Activated T-helper 2 cell treated with anti-CD3 and anti-CD28 coated beads, Interferon-gamma antibody, Interleukin-2, Interleukin-4, amounts not matched to agents 10 μg/mL and 5 μg/mL and 100 μg/mL, durations not matched to agents 14 hours and 24 hours and 36 hours (primary cell): ENCODE measurements at regions of chr10 and their contacts with region 1.

Region 1: GRCh38 chr10:106175760-106176377 is 988.6 kb downstream of the SORCS1 start:
- DNase-seq: no peak
- H3K4me3 Mint-ChIP-seq: no peak overlapping the region
- H3K27ac Mint-ChIP-seq: no peak overlapping the region
- H3K4me1 Mint-ChIP-seq: no peaks in the 10 kb centered on the region
- H3K27me3 Mint-ChIP-seq: no peaks in the 10 kb centered on the region

Region 2: DNA sequence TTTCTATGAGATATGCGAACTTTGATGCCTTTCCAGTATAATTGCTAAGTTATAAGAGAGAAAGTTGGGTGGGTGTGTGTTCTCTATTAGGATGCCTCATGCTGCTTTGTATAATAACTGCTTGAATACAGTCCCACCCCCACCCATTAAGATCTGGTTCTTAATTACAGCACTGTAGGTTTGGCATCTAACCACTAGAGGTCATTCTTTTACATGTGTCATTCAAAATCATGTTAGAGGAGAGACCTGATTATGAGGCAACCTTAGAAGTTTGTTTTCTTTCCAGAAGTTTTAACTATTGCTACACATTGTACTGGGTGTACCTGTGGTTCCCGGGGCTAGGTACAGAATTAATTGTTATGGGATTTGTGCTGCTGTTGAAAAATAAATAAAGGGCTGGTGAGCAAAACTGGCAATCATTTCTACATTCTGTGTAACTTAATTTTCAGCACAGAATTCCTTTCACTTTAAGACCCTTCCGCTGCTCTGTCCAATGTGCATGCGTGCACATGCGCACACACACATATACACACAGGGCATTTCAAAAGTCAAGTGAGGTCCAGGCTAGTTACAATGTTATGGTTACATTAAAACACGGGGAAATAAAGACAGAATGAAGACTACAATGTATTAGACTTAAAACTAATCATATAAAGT is 378.5 kb before region 1 on chr10:
- intact Hi-C with region 1: loop called (anchors 10 kb)
- DNase-seq: no peak
- H3K4me3 Mint-ChIP-seq: no peak overlapping the region
- H3K27ac Mint-ChIP-seq: no peak overlapping the region
- H3K4me1 Mint-ChIP-seq: no peaks in the 10 kb centered on the region
- H3K27me3 Mint-ChIP-seq: no peaks in the 10 kb centered on the region

Region 3: DNA sequence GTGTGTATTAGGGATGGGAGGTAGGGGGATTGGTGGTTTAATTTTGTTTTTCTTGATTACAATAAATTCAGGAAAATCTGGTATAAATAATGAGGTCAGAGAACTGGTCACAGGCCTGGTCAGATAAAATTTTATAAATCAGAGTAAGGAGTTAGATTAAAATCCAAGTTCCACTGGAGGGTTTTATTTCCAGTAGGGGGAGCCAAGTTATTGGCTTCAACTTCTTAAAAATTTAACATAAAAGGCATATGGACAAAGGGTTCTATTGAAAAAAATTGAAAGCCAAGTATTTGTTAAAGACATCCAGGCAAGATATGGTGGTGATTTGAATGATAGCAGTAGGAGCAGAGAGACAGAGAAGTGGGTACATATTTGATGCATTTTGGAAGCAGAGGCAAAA is 225.3 kb after region 1 on chr10:
- intact Hi-C with region 1: no loop called
- DNase-seq: no peak
- H3K4me3 Mint-ChIP-seq: no peak overlapping the region
- H3K27ac Mint-ChIP-seq: no peak overlapping the region
- H3K4me1 Mint-ChIP-seq: no peaks in the 10 kb centered on the region
- H3K27me3 Mint-ChIP-seq: no peaks in the 10 kb centered on the region